Heart left ventricle (tissue), 16 donors: ENCODE measurements at regions of chr7 and their contacts with region 1.

Region 1: DNA sequence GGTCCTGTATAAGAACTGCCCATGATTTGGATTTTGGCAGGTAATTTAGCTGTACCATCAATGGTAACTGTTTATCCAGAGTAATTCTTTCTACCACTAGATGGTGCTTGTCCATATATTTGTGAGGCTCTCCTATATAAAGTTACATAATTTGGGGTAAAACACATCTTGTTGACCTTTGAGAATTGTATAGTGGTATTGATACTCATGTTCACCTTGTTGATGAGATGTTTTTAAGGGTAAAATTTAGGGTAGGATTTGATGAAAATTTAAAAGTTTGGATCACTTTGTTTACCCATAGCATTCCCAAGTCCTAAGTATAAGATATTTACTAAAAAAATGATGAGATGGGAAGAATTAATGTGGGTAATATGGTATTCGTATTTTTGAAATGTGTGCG is 31.6 kb downstream of the ST7 start:
- DNase-seq: no peak
- ATAC-seq: peak in 2 of 4 donors; percentile 21 to 51
- H3K4me3 ChIP-seq: no peak overlapping the region
- H3K27ac ChIP-seq: no peak overlapping the region
- H3K4me1 ChIP-seq: peaks cover 0 to 14% (median 0%) of the 10 kb centered on the region in 12 donors
- H3K27me3 ChIP-seq: no peaks in the 10 kb centered on the region
- CTCF ChIP-seq: peak; percentile 50 to 75 (median 66)
- POLR2A ChIP-seq: no peak

Region 2: DNA sequence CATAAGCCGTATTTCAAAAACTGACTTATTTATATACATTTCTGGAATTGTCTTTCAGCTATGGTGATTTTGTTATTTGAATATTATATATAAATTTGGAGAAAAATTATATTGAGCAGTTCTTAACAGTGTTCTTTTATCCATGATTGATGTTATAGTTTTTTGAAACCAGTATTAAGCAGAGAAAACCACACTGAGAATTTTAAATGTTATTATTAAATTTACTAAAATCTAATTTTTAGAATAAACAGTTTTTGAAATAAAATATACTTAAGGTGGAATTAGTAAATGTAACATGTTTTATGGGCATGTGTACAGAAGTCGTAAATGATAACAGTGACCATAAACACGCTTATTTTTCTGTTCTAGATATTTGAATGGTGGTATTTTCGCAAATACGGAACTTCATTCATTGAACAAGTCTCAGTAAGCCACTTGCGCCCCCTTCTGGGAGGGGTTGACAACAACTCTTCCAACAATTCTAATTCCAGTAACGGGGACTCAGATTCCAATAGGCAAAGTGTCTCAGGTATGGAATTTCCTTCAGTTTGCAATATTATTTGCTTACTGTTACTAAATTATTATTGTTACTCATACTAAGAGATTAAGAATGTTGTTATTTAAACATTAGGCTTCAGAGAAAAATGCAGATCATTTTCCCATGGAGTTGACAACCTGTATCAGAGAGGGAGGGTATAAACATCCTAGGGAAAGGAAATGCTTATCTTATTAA is 134.4 kb after region 1 on chr7:
- intact Hi-C with region 1: loop called (anchors 2 to 5 kb)
- DNase-seq: peak; percentile 76 to 82 (median 78)
- ATAC-seq: peak in 3 of 4 donors; percentile 45 to 57 (median 55)
- H3K4me3 ChIP-seq: no peak overlapping the region
- H3K27ac ChIP-seq: no peak overlapping the region
- H3K4me1 ChIP-seq: peaks cover 0 to 28% (median 8%) of the 10 kb centered on the region in 12 donors
- H3K27me3 ChIP-seq: no peaks in the 10 kb centered on the region
- CTCF ChIP-seq: peak; percentile 74 to 93 (median 88)
- POLR2A ChIP-seq: no peak